ENCODE measurements at regions of chr15 and their contacts with region 1.

Region 1: DNA sequence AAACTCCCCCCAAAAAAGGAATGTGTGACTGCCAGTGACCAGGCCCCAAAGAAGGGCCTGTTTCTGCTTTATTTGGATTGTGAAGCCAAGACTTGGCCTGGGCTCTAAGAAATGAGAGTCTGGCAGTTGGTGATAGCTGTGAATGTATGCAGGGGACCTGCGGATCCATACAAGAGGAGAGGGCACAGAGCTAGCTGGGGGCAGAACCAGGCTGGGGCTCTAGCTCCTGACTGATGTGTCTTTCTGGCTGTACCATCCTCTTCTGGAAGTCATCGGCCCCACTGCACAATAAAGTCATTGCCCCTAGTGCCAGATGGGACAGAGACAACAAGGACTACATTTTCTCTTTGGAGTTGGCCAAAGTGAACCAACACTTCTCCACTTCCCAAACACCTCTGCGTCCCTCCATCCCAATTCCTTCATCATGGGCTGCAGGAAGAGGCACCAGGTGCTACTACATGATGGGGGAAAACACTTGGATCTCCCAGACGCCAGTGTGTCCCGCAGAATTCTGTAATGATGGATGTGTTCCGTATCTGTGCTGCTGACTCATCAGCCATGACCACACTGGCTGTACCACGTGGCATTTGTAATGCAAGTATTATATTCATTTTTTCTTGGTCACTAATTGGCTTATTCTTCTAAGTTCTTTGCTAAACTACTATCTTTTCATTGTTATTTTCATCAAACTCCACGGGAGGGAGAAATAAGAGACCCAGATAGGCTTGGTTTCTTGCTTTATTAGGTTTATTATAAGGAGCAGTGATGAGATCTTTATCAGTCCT is 1.7 kb upstream of the PLA2G4F start:
- DNase-seq: no peak
- ATAC-seq: no peak
- H3K4me3 Mint-ChIP-seq: no peak overlapping the region
- H3K27ac Mint-ChIP-seq: peak overlapping the region; percentile 17
- H3K4me1 Mint-ChIP-seq: no peaks in the 10 kb centered on the region
- H3K27me3 Mint-ChIP-seq: no peaks in the 10 kb centered on the region

Region 2: GRCh38 chr15:42385206-42385979 is 227.2 kb after region 1 on chr15:
- CTCF ChIA-PET with region 1: interaction called, 4 read pairs
- POLR2A ChIA-PET with region 1: no interaction called
- intact Hi-C with region 1: loop called in 1 of 2 experiments (anchors 10 kb)
- DNase-seq: peak; percentile 62
- ATAC-seq: peak; percentile 75
- H3K4me3 Mint-ChIP-seq: no peak overlapping the region
- H3K27ac Mint-ChIP-seq: no peak overlapping the region
- H3K4me1 Mint-ChIP-seq: no peaks in the 10 kb centered on the region
- H3K27me3 Mint-ChIP-seq: no peaks in the 10 kb centered on the region